Heart right ventricle (tissue), 16 donors: ENCODE measurements at regions of chr15 and their contacts with region 1.

Region 1: DNA sequence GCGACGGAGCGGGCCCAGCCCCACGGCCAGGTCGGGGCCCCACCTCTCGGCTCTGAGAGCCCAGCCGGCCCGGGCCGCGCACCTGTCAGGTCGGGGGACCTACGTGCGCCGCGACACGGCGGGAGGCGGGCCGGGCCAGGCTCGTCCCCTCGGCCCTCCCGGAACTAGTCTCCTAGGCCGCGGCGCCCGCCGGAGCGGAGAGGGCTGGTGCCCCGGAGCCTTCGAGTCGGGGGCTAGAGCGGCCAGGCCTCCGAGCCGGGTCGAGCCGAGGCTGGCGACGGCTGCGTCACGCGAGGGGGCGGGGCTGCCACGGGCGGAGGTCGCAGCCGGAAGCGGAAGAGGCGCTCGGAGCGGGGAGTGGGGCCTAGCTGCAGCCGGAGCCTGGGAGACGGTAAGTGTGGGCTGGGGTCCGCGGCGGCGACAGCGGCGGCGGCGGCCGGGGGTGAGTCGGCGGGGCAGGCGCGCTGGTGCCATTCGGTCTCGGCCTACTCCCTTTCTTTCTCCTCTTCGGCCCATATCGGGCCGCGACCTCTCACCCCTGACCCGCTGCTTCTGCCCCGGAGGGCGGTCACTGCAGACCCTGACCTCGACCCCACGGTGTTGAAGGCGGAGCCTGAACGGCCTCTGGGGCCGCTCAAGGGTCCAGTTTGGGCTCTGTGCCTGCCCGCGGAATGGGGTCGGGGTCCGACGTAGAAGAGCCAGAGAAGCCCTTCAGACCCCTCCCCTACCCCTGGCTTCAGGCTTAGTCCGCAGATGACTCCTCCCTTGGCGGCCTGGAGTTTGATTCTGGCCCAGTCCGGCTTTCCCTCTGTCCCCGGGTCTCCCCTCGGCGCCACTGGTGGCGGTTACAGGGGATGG is at the start of gene CLK3:
- DNase-seq: peak; percentile 95 to 98
- ATAC-seq: peak; percentile 80 to 90 (median 86)
- H3K4me3 ChIP-seq: peak within 1 kb of the TSS; percentile 77 to 100 (median 95)
- H3K27ac ChIP-seq: peak within 1 kb of the TSS; percentile 82 to 99 (median 98)
- H3K4me1 ChIP-seq: peaks cover 14 to 68% (median 46%) of the 10 kb centered on the region in 9 donors
- H3K27me3 ChIP-seq: no peaks in the 10 kb centered on the region
- CTCF ChIP-seq: no peak
- total RNA-seq, gene CLK3: 40.2 to 52.1 (median 45.2) TPM

Region 2: GRCh38 chr15:74438721-74439316 is 176.9 kb before region 1 on chr15:
- intact Hi-C with region 1: loop called in 1 of 10 experiments (anchors 5 kb)
- DNase-seq: peak; percentile 60 to 66
- ATAC-seq: peak; percentile 43 to 73 (median 64)
- H3K4me3 ChIP-seq: no peak overlapping the region
- H3K27ac ChIP-seq: no peak overlapping the region
- H3K4me1 ChIP-seq: peaks cover 0 to 32% (median 8%) of the 10 kb centered on the region in 9 donors
- H3K27me3 ChIP-seq: no peaks in the 10 kb centered on the region
- CTCF ChIP-seq: peak; percentile 82 to 95 (median 92)

Region 3: DNA sequence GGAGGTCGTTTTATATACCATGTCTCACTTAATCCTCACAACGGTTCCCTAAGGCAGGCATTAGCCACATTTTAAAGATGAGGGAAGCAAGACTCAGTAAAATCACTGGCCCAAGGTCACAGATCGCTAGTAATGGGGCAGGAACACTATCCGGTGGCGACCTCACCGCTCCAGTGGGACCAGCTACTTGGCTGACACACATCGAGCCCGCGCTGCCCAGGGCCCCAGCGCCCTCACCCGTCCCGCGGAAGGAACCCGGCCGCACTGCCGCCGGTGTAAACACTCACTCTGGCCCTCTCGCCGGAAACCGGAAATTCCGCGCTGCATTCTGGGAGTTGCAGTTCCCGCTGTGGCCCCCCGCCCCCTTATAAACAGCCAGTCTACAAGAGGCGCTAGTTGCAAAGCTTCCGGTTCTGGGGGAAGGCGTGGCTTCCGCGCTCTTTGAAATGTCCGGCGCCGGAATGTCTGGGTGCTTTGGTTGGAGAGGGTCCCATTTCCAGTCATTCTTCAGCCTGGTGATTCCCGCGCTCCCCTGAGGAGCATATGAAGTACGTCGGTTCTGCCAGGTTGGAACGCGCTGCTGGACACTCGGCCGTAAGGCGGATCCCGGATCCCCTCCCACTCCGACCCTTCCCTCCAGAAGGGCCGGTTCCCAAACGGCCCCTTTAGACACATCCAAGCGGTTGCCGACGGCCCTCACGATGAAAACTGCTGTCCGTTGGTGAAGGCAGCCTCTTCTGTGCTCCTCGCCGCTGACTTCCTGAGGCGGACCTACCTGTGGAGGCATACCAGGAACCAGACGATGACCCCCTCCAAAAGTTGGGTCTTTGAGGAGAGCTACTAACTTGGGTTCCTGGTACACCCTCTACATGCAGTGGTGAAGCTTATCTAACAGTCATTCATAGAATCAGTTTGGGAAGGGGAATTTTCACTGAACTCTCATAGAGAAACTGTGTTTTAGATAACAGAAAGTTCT is 154.6 kb before region 1 on chr15 and contains the start of gene UBL7:
- intact Hi-C with region 1: loop called in 5 of 10 experiments (anchors 2 to 10 kb)
- DNase-seq: peak; percentile 95 to 98
- ATAC-seq: peak; percentile 99 to 100 (median 99)
- H3K4me3 ChIP-seq: peak within 1 kb of the TSS; percentile 48 to 95 (median 72)
- H3K27ac ChIP-seq: peak within 1 kb of the TSS; percentile 54 to 92 (median 86)
- H3K4me1 ChIP-seq: peaks cover 0 to 25% (median 18%) of the 10 kb centered on the region in 9 donors
- H3K27me3 ChIP-seq: no peaks in the 10 kb centered on the region
- CTCF ChIP-seq: peak in 5 of 9 donors; percentile 14 to 48 (median 45)
- total RNA-seq, gene UBL7: 49.1 to 56.6 (median 52.7) TPM

Region 4: DNA sequence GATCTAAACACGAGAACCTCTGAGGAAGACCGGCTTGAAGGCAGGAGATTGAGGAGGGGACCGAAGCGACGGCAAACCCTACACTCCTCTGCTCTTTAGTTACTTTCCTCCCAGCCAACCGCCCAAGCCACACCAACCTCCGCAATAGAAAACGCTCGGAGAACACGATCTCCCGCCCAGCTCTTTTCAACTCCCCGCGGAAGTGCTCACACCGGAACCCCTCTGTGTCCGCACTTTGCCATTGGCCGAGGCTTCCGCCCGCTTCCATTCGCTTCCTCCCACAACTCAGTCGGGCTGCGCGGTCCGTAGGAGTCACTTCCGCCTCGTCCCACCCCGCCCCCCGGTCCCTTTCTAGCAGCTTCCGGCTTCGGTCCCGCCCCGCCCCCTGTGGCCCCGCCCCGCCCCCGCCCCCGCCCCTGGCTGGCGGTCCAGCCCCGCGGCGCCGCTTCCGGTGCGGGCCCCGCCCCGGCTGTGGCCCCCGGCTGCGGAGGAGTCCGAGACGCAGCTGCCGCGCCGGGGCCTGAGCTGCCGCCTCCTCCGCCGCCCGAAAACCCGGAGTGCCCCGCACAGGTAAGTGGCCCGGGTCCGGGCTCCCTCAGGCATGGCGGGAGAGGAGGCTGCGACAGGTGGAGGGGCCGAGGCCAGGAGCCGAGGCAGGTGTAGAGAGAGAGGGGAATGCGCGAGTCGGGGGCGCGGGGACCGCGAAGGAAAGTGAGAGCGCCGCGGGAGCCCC is 74.8 kb before region 1 on chr15 and contains the start of gene ARID3B:
- intact Hi-C with region 1: loop called (anchors 2 to 5 kb)
- DNase-seq: peak; percentile 97 to 98
- ATAC-seq: peak; percentile 98 to 100 (median 99)
- H3K4me3 ChIP-seq: peak within 1 kb of the TSS; percentile 80 to 97 (median 92)
- H3K27ac ChIP-seq: peak within 1 kb of the TSS in 9 of 10 donors; percentile 60 to 93 (median 79)
- H3K4me1 ChIP-seq: peaks cover 7 to 49% (median 29%) of the 10 kb centered on the region in 9 donors
- H3K27me3 ChIP-seq: no peaks in the 10 kb centered on the region
- CTCF ChIP-seq: no peak
- total RNA-seq, gene ARID3B: 1.2 to 3.7 (median 2.4) TPM

Region 5: GRCh38 chr15:74545880-74546656 is 69.7 kb before region 1 on chr15:
- intact Hi-C with region 1: loop called (anchors 2 to 5 kb)
- DNase-seq: peak; percentile 97 to 99
- ATAC-seq: peak; percentile 95 to 98 (median 96)
- H3K4me3 ChIP-seq: peak overlapping the region in 2 of 10 donors; percentile 1 to 7
- H3K27ac ChIP-seq: peak overlapping the region in 2 of 10 donors; percentile 23 to 46
- H3K4me1 ChIP-seq: peaks cover 6 to 72% (median 35%) of the 10 kb centered on the region in 9 donors
- H3K27me3 ChIP-seq: no peaks in the 10 kb centered on the region
- CTCF ChIP-seq: no peak

Region 6: DNA sequence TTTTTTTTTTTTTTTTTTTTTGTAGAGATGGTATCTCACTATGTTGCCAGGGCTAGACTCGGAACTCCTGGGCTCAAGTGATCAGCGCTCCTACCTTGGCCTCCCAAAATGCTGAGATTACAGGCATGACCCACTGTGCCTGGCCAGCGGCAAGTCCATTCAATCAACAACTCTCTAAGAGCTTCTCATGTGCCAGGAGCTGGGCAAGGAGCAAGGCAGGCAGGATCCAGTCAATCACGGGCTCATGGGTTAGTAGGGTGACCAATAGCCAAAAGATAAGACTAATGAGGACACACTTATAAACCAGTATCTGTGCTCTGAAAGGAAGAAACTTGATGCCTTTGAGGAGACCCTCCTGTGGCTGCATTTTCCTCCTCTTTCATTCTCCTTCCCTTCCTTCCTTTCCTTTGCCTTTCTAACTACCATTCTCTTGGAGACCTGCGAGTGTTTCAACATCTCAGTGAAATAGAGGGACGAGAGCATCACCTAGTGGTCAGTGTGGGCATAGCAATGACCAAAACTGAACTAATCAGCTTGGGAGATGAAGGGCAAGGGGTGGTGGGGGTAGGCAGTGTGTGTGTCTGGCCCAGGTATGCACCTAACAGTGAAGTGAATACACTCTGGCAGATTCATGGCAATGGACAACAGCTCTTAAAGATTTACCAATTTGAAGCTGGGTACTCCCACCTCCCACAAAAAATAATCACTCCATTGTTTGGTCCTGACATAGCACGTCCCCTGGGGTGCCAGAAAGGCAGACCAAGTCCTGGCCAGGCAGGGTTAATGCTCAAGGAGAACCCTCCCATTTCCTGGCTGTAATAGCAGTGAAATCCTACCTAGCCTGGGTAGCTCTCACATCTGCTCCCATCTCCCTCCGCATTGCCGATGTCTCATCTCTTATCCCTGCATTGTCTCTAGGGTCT is 334.6 kb after region 1 on chr15:
- intact Hi-C with region 1: loop called in 1 of 10 experiments (anchors 10 kb)
- DNase-seq: peak in 1 of 2 donors; percentile 73
- ATAC-seq: peak; percentile 66 to 82 (median 69)
- H3K4me3 ChIP-seq: no peak overlapping the region
- H3K27ac ChIP-seq: no peak overlapping the region
- H3K4me1 ChIP-seq: peaks cover 0 to 20% (median 14%) of the 10 kb centered on the region in 9 donors
- H3K27me3 ChIP-seq: peaks cover 0 to 4% (median 0%) of the 10 kb centered on the region in 7 donors
- CTCF ChIP-seq: peak; percentile 88 to 98 (median 95)